Activated T-helper 1 cell treated with anti-CD3 and anti-CD28 coated beads, Interleukin-12 subunit alpha, Interleukin-12 subunit beta, Interleukin-2, Interleukin-4 antibody, amounts not matched to agents 30 ng/mL and 10 ng/mL and 1 ng/mL, durations not matched to agents 14 hours and 24 hours and 36 hours (primary cell): ENCODE measurements at regions of chr19 and their contacts with region 1.

Region 1: GRCh38 chr19:38335949-38336637 is 463 bp downstream of the CATSPERG start:
- DNase-seq: peak; percentile 94
- H3K4me3 Mint-ChIP-seq: peak overlapping the region; percentile 94
- H3K27ac Mint-ChIP-seq: peak overlapping the region; percentile 99
- H3K4me1 Mint-ChIP-seq: peaks cover 6% of the 10 kb centered on the region
- H3K27me3 Mint-ChIP-seq: no peaks in the 10 kb centered on the region

Region 2: GRCh38 chr19:37899966-37900365 is 436.1 kb before region 1 on chr19:
- intact Hi-C with region 1: loop called (anchors 1 kb)
- DNase-seq: no peak
- H3K4me3 Mint-ChIP-seq: no peak overlapping the region
- H3K27ac Mint-ChIP-seq: no peak overlapping the region
- H3K4me1 Mint-ChIP-seq: peaks cover 4% of the 10 kb centered on the region
- H3K27me3 Mint-ChIP-seq: no peaks in the 10 kb centered on the region

Region 3: DNA sequence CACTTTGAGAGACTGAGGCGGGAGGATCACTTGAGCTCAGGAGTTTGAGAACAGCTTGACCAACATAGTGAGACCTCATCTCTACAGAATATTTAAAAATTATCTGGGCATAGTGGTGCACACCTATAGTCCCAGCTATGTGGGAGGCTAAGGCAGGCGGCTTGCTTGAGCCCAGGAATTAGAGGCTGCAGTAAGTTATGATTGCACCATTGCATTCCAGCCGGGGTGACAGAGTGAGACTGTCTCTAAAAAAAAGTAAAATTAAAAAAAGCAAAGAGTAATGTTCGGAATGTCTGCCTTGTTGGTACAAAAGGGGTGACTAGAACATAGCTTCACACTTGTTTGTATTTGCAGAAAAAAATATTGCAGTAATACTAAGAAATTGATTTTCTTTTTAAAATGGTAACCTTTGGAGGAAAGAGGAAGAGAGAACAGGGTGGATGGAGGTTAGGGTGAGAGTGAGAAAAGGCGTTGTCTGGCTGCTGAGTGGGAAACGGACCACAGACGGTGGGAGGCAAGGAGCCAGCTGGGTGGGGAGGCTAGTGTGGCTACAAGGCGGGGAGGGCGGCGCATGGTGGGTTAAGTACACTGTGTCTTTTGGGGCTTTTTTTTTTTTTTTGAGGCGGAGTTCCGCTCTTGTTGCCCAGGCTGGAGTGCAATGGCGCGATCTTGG is 90.1 kb before region 1 on chr19:
- intact Hi-C with region 1: loop called (anchors 1 kb)
- DNase-seq: no peak
- H3K4me3 Mint-ChIP-seq: no peak overlapping the region
- H3K27ac Mint-ChIP-seq: no peak overlapping the region
- H3K4me1 Mint-ChIP-seq: peaks cover 10% of the 10 kb centered on the region
- H3K27me3 Mint-ChIP-seq: no peaks in the 10 kb centered on the region

Region 4: DNA sequence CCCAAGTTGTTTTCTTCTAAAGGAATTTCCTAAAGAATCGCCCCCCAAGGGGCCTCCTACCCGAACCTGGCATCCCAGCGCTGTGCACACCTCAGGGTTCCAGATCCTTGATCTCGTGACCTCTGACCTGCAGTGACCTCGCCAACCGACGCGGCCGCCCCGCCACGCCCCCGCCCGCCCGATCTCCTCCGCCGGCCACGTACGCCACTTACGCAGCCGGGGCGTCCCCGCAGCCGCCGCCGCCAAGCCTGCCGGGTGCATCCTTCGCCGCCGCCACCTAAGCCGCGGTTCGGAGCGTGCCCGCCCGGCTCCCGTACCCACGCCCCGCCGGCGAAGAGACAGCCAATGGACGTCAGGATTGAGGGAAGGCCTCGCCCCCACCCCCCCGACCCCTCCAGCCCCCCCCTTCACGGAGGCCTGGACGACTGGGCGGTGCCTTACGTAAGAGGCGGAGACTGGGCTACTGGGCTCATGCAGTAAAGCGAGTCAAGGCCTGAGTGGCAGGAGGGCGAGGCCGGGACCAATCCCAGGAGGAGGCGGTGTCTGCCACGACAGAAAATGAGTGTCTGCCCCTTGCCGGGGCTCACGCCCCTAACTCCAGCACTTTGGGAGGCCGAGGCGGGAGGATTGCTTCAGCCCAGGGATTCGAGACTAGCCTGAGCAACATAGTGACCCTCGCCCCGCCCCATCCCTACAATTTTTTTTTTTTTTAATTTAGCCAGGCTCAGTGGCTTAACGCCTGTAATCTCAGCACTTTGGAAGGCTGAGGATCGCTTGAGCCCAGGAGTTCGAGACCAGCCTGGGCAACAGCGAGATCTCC is 20.2 kb before region 1 on chr19 and contains the start of gene YIF1B:
- intact Hi-C with region 1: loop called (anchors 1 kb)
- DNase-seq: peak; percentile 94
- H3K4me3 Mint-ChIP-seq: peak within 1 kb of the TSS; percentile 85
- H3K27ac Mint-ChIP-seq: peak within 1 kb of the TSS; percentile 96
- H3K4me1 Mint-ChIP-seq: peaks cover 46% of the 10 kb centered on the region
- H3K27me3 Mint-ChIP-seq: no peaks in the 10 kb centered on the region
- total RNA-seq, gene YIF1B: 89.8 and 96.0 TPM in 2 replicates

Region 5: DNA sequence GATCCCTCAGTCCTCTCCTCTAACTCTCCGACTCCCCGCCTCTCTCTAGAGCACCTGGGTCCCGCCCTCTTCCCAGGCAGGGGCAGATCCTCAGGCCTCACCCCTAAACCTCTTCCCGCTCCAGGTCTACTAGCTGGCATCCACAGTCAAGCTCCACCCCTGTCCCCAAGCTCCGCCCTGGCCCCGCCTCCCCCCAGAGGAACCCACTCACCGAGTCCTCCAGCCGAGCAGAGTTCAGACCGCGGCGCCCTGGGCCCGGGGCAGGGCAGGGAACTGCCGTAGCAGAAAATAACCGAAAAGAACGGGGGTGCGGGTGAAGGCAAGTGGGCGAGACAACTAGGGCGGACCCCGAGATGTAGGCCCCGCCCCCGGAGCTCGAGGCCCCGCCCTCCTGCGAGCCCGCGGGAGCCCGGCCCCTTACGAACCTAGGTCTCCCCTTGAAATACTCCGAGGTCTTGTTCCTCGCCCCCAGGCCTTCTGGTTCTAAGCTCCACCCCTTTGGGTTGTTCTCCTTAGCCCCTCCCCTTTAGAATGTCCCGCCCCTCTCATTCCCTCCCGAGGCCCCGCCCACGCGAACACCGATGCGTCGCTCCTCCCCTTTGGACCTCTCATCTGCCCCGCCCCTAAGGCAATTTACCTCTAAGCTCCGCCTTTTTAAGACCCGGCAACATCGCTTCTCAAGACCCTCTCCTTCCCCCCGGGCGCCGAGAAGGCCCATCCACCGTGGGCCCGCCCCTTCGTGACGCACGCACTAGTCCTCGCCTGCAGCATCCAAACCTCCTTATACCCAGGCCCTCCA is 51.7 kb after region 1 on chr19 and contains the start of gene GGN:
- intact Hi-C with region 1: loop called (anchors 1 kb)
- DNase-seq: peak; percentile 73
- H3K4me3 Mint-ChIP-seq: peak within 1 kb of the TSS; percentile 89
- H3K27ac Mint-ChIP-seq: peak within 1 kb of the TSS; percentile 91
- H3K4me1 Mint-ChIP-seq: peaks cover 16% of the 10 kb centered on the region
- H3K27me3 Mint-ChIP-seq: peaks cover 21% of the 10 kb centered on the region
- total RNA-seq, gene GGN: 0.17 and 0.39 TPM in 2 replicates

Region 6: DNA sequence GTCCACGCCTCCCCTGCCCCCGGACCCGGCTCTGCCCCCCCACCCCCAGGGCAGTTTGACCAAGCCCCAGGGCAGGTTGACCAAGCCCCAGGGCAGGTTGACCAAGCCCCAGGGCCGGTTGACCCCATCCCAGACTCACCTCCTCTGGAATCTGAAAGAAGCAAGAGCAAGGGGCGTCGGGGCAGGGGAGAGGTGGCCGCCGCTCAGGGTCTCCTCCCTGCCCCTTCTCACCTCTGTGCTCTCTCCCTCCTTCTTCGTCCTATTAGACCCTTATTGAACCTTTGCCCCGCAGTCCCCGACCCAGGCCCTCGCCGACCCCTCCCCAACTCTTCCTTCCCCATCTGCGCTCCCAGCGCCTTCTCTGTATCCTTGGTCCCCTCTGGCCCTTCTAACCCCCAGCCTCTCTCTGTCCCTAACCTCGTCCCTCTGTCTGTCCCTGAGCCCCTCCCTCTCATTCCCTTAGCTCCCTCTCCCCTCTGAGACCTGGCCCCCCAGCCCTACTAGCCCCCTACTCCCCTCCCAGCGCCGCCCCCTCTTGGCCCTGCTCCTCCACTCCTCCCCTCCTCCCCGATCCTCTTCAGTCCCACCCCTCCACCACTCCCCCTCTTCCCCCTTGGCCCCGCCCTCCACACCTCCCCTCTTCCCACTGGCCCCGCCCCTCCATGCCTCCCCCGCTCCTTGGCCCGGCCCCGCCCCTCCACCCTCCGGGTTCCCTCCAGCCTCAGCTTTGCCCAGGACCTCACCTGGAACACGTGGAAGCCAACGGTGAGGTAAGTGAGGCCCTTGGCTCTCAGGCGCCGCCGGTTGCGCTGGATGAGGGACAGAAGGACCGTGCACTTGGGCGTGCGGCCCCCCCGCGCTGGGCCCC is 400.6 kb after region 1 on chr19:
- intact Hi-C with region 1: loop called (anchors 2 kb)
- DNase-seq: peak; percentile 38
- H3K4me3 Mint-ChIP-seq: peak overlapping the region; percentile 61
- H3K27ac Mint-ChIP-seq: peak overlapping the region; percentile 48
- H3K4me1 Mint-ChIP-seq: peaks cover 45% of the 10 kb centered on the region
- H3K27me3 Mint-ChIP-seq: peaks cover 8% of the 10 kb centered on the region

Region 7: DNA sequence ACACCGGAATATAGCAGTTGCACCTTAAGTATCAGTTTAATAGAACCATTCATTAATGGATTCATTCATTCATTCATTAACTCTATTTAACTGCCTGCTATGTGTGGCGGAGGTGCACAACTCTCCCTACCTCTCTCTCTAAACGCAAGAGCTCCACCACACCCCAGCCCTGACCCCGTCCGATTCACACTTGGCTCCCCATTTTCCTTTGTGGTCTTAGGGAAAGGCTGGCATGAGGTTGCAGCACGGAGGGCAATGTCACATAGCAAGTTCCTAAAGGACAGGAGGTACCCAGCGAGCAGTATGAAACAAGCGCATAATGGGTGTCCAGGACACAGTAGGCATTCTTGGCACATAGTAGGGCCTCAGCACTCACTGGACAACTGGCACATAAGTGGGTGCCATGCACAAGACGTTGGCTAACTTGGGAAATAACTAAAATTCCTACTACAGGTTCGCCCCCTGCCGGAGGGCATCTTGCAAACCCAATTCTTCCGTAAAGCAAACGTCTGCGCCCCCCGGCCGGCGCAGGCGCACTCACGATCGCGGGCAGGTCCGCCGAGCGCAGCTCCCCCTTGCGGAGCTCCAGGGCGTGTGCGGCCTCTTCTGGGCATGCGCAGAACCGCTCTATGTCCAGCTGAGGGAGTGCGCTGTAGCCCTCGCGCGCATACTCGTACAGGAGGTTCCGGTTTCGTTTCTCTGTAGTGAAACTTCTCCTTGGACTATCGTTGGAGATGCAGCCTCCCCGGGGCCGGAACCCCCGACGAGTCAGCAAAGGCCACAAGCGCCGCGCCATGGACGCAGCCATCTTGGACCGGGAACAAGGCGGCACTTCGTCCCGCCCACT is 594.1 kb after region 1 on chr19 and contains the start of gene SARS2:
- intact Hi-C with region 1: loop called (anchors 1 kb)
- DNase-seq: peak; percentile 91
- H3K4me3 Mint-ChIP-seq: peak within 1 kb of the TSS; percentile 99
- H3K27ac Mint-ChIP-seq: peak within 1 kb of the TSS; percentile 97
- H3K4me1 Mint-ChIP-seq: peaks cover 28% of the 10 kb centered on the region
- H3K27me3 Mint-ChIP-seq: no peaks in the 10 kb centered on the region
- total RNA-seq, gene SARS2: 36.5 and 38.4 TPM in 2 replicates